CD8-positive, alpha-beta memory T cell (primary cell): ENCODE measurements at regions of chr6 and their contacts with region 1.

Region 1: DNA sequence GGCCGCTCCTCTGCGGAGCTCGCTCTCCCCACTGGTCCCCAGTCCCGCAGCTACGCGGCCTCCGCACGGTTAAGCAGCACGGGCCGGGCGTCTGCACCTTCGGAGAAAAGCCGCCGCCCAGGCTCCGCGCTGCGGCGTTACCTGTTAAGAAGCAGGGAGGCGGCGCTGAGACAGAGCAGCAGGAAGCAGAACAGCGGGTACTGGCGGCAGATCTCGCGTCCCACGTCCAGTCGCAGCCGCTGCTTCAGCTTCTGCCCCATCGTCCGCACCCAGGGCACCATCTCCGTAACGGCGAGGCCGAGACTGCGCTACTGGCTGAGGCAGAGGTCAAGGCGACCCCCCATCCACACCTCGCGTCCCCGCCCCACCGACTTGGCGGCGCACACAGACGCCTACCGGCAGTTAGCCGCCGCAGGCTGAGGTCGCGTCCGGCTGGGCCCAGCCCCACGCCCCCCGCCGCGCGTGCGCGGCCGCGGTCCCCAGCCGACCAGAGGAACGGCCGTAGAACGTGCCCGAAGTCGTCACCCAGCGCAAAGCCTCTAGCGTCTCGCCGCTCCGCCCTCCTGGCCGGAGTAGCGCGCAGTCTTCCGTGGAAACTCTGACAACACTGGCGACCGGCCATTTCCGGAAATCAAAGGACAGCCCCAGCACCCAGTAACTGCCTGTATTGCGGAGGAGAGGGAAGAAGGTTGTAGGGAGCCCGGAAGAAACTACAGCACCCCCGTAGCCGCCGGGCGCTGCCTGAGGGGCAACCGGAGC is at the start of gene SNX14:
- DNase-seq: peak; percentile 61 to 88 (median 81)
- H3K4me3 ChIP-seq: peak within 1 kb of the TSS; percentile 71
- H3K4me3 Mint-ChIP-seq: peak within 1 kb of the TSS; percentile 90 to 99 (median 98)
- H3K27ac ChIP-seq: peak within 1 kb of the TSS; percentile 80
- H3K27ac Mint-ChIP-seq: peak within 1 kb of the TSS; percentile 83 to 99 (median 98)
- H3K4me1 ChIP-seq: peaks cover 15% of the 10 kb centered on the region
- H3K4me1 Mint-ChIP-seq: peaks cover 45 to 58% (median 58%) of the 10 kb centered on the region in 3 donors
- H3K27me3 ChIP-seq: no peaks in the 10 kb centered on the region
- H3K27me3 Mint-ChIP-seq: no peaks in the 10 kb centered on the region
- total RNA-seq, gene SNX14: 52.4 to 56.1 TPM

Region 2: GRCh38 chr6:85516168-85516567 is 77.4 kb before region 1 on chr6:
- CTCF ChIA-PET with region 1: no interaction called
- POLR2A ChIA-PET with region 1: no interaction called
- DNase-seq: no peak
- H3K4me3 ChIP-seq: no peak overlapping the region
- H3K4me3 Mint-ChIP-seq: no peak overlapping the region
- H3K27ac ChIP-seq: no peak overlapping the region
- H3K27ac Mint-ChIP-seq: no peak overlapping the region
- H3K4me1 ChIP-seq: no peaks in the 10 kb centered on the region
- H3K4me1 Mint-ChIP-seq: peaks cover 0 to 2% (median 0%) of the 10 kb centered on the region in 3 donors
- H3K27me3 ChIP-seq: no peaks in the 10 kb centered on the region
- H3K27me3 Mint-ChIP-seq: no peaks in the 10 kb centered on the region

Region 3: DNA sequence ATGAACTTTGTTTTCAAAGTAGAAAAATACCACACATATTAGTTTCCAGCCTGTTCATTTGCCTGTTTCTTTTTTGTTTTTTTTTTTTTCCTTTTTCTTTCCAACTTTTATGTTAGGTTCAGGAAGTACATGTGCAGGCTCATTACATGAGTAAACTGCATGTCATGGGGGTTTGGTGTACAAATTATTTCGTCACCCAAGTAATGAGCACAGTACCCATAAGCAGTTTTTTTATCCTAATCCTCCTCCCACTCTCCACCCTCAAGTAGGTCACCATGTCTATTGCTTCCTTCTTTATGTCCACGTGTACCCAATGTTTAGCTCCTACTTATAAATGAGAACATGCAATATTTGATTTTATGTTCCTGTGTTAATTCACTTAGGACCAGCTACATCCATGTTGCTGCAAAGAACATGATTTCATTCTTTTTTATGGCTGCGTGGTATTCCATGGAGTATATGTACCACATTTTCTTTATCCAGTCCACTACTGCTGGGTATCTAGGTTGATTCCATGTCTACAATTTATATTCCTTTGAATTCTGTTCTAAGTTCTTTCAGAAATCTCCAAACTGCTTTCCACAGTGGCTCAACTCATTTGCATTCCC is 31.8 kb before region 1 on chr6:
- CTCF ChIA-PET with region 1: no interaction called
- POLR2A ChIA-PET with region 1: no interaction called
- DNase-seq: no peak
- H3K4me3 ChIP-seq: no peak overlapping the region
- H3K4me3 Mint-ChIP-seq: no peak overlapping the region
- H3K27ac ChIP-seq: no peak overlapping the region
- H3K27ac Mint-ChIP-seq: peak overlapping the region in 2 of 8 donors; percentile 10 to 43
- H3K4me1 ChIP-seq: no peaks in the 10 kb centered on the region
- H3K4me1 Mint-ChIP-seq: peaks cover 0 to 5% (median 4%) of the 10 kb centered on the region in 3 donors
- H3K27me3 ChIP-seq: no peaks in the 10 kb centered on the region
- H3K27me3 Mint-ChIP-seq: no peaks in the 10 kb centered on the region

Region 4: GRCh38 chr6:85678602-85679444 is 85.2 kb after region 1 on chr6:
- CTCF ChIA-PET with region 1: interaction called, 18 read pairs
- POLR2A ChIA-PET with region 1: interaction called, 53 read pairs
- DNase-seq: peak; percentile 95 to 99 (median 99)
- H3K4me3 ChIP-seq: peak overlapping the region; percentile 96
- H3K4me3 Mint-ChIP-seq: peak overlapping the region; percentile 96 to 100 (median 98)
- H3K27ac ChIP-seq: peak overlapping the region; percentile 95
- H3K27ac Mint-ChIP-seq: peak overlapping the region; percentile 94 to 100 (median 98)
- H3K4me1 ChIP-seq: peaks cover 37% of the 10 kb centered on the region
- H3K4me1 Mint-ChIP-seq: peaks cover 41 to 48% (median 48%) of the 10 kb centered on the region in 3 donors
- H3K27me3 ChIP-seq: no peaks in the 10 kb centered on the region
- H3K27me3 Mint-ChIP-seq: peaks cover 0 to 6% of the 10 kb centered on the region in 2 donors